ENCODE measurements at regions of chr3 and their contacts with region 1.

Region 1: DNA sequence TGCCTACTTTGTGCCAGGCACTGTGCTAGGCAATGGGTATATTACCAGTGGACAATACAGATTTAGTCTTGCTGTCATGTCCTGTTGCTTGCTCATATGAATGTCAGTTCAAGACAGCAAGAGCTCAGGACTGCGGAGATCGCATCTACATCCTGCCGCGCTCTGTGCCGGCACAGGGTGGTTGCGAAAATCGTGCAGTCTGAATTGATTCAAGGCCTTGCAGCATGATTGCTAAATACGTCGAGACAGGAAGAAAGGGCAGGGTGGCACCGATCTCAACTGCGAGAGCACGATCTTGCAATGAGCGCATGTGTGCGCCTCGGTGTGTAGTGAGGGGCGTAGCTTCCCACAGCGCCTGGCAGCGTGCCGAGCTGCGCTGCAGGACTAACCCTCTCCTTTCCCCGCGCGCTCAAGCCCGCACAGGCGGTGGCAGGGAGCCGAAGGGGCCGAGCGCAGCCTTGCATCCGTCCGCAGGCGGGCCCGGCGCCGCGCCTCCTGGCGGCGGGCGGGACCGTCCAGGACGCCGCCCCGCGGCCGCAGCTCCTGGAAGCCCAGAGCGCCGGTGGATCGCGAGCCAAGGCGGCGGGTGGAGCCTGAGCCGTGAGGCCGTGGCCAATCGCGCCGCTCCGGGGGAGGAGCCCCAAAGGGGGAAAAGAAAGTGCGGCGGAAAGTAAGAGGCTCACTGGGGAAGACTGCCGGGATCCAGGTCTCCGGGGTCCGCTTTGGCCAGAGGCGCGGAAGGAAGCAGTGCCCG is at the start of gene IL1RAP:
- DNase-seq: peak; percentile 89 to 95 (median 92)
- H3K4me3 ChIP-seq: peak within 1 kb of the TSS; percentile 71 to 92 (median 88)
- H3K4me3 Mint-ChIP-seq: peak within 1 kb of the TSS; percentile 95 to 96
- H3K27ac ChIP-seq: peak within 1 kb of the TSS; percentile 78 to 93
- H3K27ac Mint-ChIP-seq: peak within 1 kb of the TSS; percentile 91 to 97 (median 97)
- H3K4me1 ChIP-seq: peaks cover 19 to 32% of the 10 kb centered on the region in 2 donors
- H3K4me1 Mint-ChIP-seq: peaks cover 37% of the 10 kb centered on the region
- H3K27me3 ChIP-seq: no peaks in the 10 kb centered on the region
- H3K27me3 Mint-ChIP-seq: peaks cover 0 to 2% (median 0%) of the 10 kb centered on the region in 3 donors
- CTCF ChIP-seq: peak; percentile 81
- polyA plus RNA-seq, gene IL1RAP: 8.0 to 12.6 (median 11.8) TPM

Region 2: GRCh38 chr3:190566043-190566933 is 52.7 kb after region 1 on chr3:
- intact Hi-C with region 1: loop called (anchors 5 to 10 kb)
- DNase-seq: peak; percentile 99 to 100 (median 100)
- H3K4me3 ChIP-seq: peak overlapping the region in 2 of 3 experiments; percentile 22 to 39
- H3K4me3 Mint-ChIP-seq: peak overlapping the region; percentile 36 to 39
- H3K27ac ChIP-seq: peak overlapping the region in 1 of 2 donors; percentile 90
- H3K27ac Mint-ChIP-seq: peak overlapping the region; percentile 90 to 97 (median 95)
- H3K4me1 ChIP-seq: peaks cover 17% of the 10 kb centered on the region in 2 donors
- H3K4me1 Mint-ChIP-seq: peaks cover 18% of the 10 kb centered on the region
- H3K27me3 ChIP-seq: no peaks in the 10 kb centered on the region
- H3K27me3 Mint-ChIP-seq: no peaks in the 10 kb centered on the region
- CTCF ChIP-seq: no peak

Region 3: GRCh38 chr3:190617185-190617584 is 103.6 kb after region 1 on chr3:
- intact Hi-C with region 1: loop called (anchors 2 to 10 kb)
- DNase-seq: peak; percentile 97 to 99 (median 97)
- H3K4me3 ChIP-seq: peak overlapping the region in 1 of 3 experiments; percentile 29
- H3K4me3 Mint-ChIP-seq: peak overlapping the region in 1 of 2 donors; percentile 69
- H3K27ac ChIP-seq: peak overlapping the region; percentile 25 to 86
- H3K27ac Mint-ChIP-seq: peak overlapping the region; percentile 90 to 98 (median 97)
- H3K4me1 ChIP-seq: peaks cover 62 to 74% of the 10 kb centered on the region in 2 donors
- H3K4me1 Mint-ChIP-seq: peaks cover 67% of the 10 kb centered on the region
- H3K27me3 ChIP-seq: no peaks in the 10 kb centered on the region
- H3K27me3 Mint-ChIP-seq: peaks cover 0 to 2% (median 0%) of the 10 kb centered on the region in 3 donors
- CTCF ChIP-seq: no peak

Region 4: DNA sequence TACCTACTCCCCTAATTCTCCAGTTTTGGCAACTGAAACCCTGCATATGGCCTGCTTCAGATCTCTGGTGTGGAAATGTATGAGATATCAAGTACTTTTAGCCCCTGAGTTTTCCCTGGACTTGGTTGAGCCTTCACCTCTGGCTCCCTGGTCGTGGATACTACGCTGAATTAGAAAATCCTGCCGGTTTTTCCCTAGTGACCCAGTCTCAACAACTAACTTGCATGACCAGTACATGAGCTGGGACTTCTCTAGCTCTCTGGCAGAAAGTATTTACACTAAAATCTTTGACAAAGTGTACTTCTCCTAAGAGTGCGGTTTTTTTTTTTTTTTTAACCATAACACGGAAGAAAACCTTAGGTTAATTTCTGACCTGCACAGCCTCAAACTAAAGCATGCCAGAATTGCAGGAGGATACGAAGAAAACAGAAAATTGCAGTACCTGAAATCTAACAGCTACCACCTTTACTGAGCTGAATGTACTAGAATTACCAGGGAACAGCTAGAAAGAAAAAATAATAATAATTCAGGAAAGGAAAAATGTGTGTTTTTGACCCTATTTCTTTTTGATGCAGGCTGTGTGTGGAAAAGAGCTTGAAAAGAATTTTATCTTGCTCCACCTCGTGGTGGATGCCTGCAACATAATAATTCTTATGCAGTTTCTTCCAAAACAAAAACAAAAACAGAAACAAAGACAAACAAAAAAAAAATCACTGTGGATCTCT is 183.4 kb after region 1 on chr3:
- intact Hi-C with region 1: loop called (anchors 5 to 10 kb)
- DNase-seq: peak; percentile 9 to 37 (median 12)
- H3K4me3 ChIP-seq: no peak overlapping the region
- H3K4me3 Mint-ChIP-seq: no peak overlapping the region
- H3K27ac ChIP-seq: no peak overlapping the region
- H3K27ac Mint-ChIP-seq: peak overlapping the region in 2 of 7 donors; percentile 30 to 43
- H3K4me1 ChIP-seq: no peaks in the 10 kb centered on the region
- H3K4me1 Mint-ChIP-seq: peaks cover 4% of the 10 kb centered on the region
- H3K27me3 ChIP-seq: no peaks in the 10 kb centered on the region
- H3K27me3 Mint-ChIP-seq: peaks cover 0 to 2% (median 0%) of the 10 kb centered on the region in 3 donors
- CTCF ChIP-seq: peak; percentile 74

Region 5: DNA sequence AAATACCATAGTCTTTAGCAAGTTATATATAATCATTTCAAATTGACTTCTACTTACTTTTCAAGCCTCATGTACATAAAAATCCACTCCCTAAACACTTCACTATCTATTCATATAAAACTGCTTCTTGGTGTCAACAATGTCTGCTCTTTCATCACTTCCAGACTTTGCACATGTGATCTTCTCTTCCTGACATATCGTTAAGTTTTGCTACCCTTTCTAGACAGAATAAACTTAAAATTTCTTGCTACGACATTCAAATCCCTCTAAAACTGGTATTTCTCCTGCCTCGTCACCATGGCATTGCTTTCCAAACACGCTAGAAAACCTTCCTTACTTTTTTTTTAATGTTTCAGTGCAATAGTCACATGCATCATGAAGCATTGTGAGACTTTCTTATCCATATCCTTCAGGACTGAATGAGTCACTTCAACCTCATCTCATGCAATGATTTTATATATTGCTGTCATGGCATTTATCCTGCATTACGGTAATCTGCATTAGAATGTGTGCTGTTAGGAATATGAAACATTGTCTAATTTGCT is 226.1 kb after region 1 on chr3:
- intact Hi-C with region 1: no loop called
- DNase-seq: no peak
- H3K4me3 ChIP-seq: no peak overlapping the region
- H3K4me3 Mint-ChIP-seq: no peak overlapping the region
- H3K27ac ChIP-seq: no peak overlapping the region
- H3K27ac Mint-ChIP-seq: no peak overlapping the region
- H3K4me1 ChIP-seq: no peaks in the 10 kb centered on the region
- H3K4me1 Mint-ChIP-seq: no peaks in the 10 kb centered on the region
- H3K27me3 ChIP-seq: no peaks in the 10 kb centered on the region
- H3K27me3 Mint-ChIP-seq: peaks cover 0 to 4% (median 0%) of the 10 kb centered on the region in 3 donors
- CTCF ChIP-seq: no peak